Ascending aorta (tissue), 2 donors: ENCODE measurements at regions of chr9 and their contacts with region 1.

Region 1: GRCh38 chr9:99445371-99445891 is 223.3 kb downstream of the SEC61B start:
- DNase-seq: peak in 1 of 2 donors; percentile 81
- H3K4me3 ChIP-seq: no peak overlapping the region
- H3K27ac ChIP-seq: peak overlapping the region; percentile 46 to 55
- H3K4me1 ChIP-seq: no peaks in the 10 kb centered on the region
- H3K27me3 ChIP-seq: no peaks in the 10 kb centered on the region
- CTCF ChIP-seq: no peak

Region 2: DNA sequence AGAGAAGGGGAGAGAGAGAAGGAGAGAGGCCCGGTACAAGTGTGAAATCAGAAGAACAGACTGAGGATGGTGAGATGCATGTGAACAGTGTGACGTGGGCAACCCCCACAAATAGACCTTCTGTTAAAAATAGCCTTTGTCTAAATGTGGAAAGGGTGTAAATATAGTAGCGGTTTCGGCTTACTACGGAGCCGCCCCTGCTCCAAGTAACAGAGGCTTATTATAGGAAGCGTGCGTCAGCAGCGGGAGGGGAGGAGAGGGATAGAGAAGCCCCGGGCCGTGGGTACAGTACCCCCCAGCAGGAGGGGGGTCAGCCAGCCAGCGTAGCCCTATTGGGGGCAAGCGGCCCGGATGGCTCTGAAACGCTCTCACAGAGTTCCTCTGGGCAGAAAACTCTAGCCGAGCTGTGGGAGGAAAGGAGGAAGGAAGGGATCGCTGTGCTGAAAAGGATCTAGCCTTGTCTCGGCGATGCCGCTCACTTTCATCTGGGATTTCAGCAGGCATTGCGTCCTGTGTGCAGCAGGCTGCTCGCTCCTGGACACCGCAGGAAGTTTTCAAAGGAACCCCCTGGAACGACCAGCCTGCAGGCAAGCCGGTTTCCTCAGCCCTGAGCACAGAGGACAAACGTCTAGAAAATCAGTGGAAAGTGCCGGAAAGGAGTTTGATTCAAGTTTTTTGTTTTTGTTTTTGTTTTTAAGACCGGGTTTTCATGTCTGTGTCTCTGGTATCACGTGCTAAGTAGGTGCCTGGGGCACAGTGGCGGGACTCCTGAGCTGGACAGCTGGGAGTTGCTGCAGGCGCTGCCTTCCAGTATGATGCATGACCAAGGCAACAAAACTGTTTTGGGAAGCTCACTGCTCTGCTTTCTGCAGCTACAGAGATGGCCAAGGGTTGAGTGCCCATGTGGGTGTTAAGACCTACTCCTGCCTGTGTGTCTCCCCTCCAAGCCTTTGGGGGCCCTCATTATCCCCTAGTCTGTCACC is 76.8 kb before region 1 on chr9:
- intact Hi-C with region 1: loop called (anchors 1 kb)
- DNase-seq: peak; percentile 51 to 88
- H3K4me3 ChIP-seq: peak overlapping the region; percentile 56 to 77
- H3K27ac ChIP-seq: peak overlapping the region; percentile 90 to 95
- H3K4me1 ChIP-seq: peaks cover 0 to 8% of the 10 kb centered on the region in 2 donors
- H3K27me3 ChIP-seq: no peaks in the 10 kb centered on the region
- CTCF ChIP-seq: no peak